K562 (cell line): ENCODE measurements at regions of chr4 and their contacts with region 1.

Region 1: DNA sequence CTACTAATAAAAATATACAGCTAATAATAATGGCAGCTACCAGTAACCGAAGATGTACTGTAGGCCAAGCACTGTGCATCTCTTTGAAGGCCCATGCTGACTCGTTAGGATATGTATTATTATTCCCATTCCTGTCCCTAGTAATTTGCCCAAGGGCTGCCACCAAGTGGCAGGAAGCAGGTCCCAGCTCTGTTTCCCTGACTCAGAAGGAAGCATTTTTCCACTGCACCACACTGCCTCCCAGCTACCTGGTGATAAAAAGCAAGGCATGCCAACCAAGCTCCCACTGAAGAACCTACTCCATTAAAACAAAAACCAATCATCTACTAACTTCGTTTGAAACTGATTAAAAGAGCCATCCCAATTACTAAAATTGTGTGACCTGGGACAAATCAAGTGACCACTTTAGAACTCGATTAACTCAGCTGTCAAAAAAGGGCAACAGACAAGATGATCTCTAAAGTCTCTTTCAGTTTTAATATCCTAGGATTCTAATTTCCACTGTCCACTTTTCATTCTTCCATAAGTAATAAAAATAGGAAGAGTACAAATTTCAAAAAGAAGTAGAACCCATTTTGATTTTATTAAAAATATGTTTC is 24.3 kb upstream of the PGM2 start:
- DNase-seq: peak in 3 of 4 experiments; percentile 11 to 61 (median 24)
- ATAC-seq: peak; percentile 84
- H3K4me3 ChIP-seq: no peak overlapping the region
- H3K27ac ChIP-seq: no peak overlapping the region
- H3K4me1 ChIP-seq: no peaks in the 10 kb centered on the region
- H3K27me3 ChIP-seq: no peaks in the 10 kb centered on the region
- CTCF ChIP-seq: peak; percentile 55 to 88 (median 85)
- EP300 ChIP-seq: no peak
- POLR2A ChIP-seq: no peak
- RAD21 ChIP-seq: peak; percentile 72 to 87

Region 2: DNA sequence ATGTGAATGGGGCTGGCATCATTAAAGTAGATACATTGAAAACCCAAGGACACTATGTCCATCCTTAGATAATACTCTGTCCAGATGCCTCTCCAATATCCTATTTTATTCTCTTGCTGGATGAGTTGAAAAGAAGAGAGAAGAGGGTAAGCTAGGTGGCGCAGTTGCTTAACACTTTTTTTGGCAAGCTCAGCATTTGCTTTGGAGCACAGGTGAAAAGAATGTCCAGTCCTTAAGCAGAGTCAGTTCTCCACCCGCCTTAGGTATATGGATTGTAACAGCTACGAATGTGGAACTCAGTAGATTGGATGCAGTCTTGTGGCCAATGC is 349.3 kb before region 1 on chr4:
- CTCF ChIA-PET with region 1: interaction called, 3 read pairs
- POLR2A ChIA-PET with region 1: no interaction called
- in situ Hi-C with region 1: no loop called
- intact Hi-C with region 1: loop called (anchors 1 kb)
- DNase-seq: peak; percentile 12 to 70 (median 30)
- ATAC-seq: peak; percentile 89
- H3K4me3 ChIP-seq: no peak overlapping the region
- H3K27ac ChIP-seq: no peak overlapping the region
- H3K4me1 ChIP-seq: peaks cover 0 to 9% of the 10 kb centered on the region in 2 experiments; a peak in 2 of 5 replicates
- H3K27me3 ChIP-seq: peaks cover 7 to 9% of the 10 kb centered on the region in 2 experiments; a peak in 4 of 5 replicates
- CTCF ChIP-seq: peak; percentile 54 to 71 (median 64)
- EP300 ChIP-seq: no peak
- POLR2A ChIP-seq: no peak
- RAD21 ChIP-seq: peak; percentile 47 to 77; a peak in 3 of 4 replicates

Region 3: GRCh38 chr4:37603070-37603468 is 199.1 kb before region 1 on chr4:
- CTCF ChIA-PET with region 1: interaction called, 16 read pairs
- POLR2A ChIA-PET with region 1: no interaction called
- in situ Hi-C with region 1: no loop called
- intact Hi-C with region 1: loop called (anchors 1 kb)
- DNase-seq: peak; percentile 76 to 87 (median 83)
- ATAC-seq: peak; percentile 99
- H3K4me3 ChIP-seq: no peak overlapping the region
- H3K27ac ChIP-seq: no peak overlapping the region
- H3K4me1 ChIP-seq: 0 out of 5 replicates have a peak, but pooled peaks cover 0 to 3% of the 10 kb centered on the region in 2 experiments
- H3K27me3 ChIP-seq: no peaks in the 10 kb centered on the region; a peak in 2 of 5 replicates
- CTCF ChIP-seq: peak; percentile 86 to 93 (median 92)
- EP300 ChIP-seq: no peak
- POLR2A ChIP-seq: no peak
- RAD21 ChIP-seq: peak; percentile 90 to 96

Region 4: DNA sequence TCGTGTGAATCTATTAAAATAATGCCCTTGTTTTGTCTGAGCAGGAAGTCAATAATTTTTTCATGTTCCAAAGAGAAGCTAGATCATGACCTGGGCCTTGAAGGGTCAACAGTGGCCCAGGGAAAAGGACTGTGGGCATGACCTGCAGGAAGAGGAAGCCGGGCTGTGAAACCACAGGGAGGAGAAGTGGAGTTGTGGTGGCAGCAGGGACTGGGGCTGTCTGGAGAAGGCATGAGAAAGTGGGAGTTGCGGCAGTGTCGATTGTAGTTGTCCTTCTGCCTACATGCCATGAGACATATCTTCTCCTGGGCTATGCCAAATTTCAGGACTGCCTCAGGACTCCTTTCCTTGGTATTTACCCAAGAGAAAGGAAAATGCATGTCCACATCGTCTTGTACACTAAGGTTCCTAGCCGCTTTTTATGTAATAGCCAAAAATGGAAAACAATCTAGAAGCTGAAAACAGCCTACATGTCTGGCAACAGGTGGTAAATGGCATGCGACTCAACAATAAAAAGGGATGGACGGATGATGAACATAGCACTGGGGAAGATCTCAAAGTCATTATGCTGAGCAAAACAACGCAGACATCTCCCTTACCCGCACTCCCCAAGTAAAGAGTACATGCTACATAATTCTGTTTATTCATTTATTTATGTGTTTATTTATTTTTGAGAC is 144.5 kb after region 1 on chr4:
- CTCF ChIA-PET with region 1: no interaction called
- POLR2A ChIA-PET with region 1: no interaction called
- in situ Hi-C with region 1: no loop called
- intact Hi-C with region 1: no loop called
- DNase-seq: no peak
- ATAC-seq: no peak
- H3K4me3 ChIP-seq: no peak overlapping the region
- H3K27ac ChIP-seq: no peak overlapping the region
- H3K4me1 ChIP-seq: no peaks in the 10 kb centered on the region
- H3K27me3 ChIP-seq: peaks cover 14 to 18% of the 10 kb centered on the region in 2 experiments
- CTCF ChIP-seq: no peak
- EP300 ChIP-seq: no peak
- POLR2A ChIP-seq: no peak
- RAD21 ChIP-seq: no peak

Region 5: DNA sequence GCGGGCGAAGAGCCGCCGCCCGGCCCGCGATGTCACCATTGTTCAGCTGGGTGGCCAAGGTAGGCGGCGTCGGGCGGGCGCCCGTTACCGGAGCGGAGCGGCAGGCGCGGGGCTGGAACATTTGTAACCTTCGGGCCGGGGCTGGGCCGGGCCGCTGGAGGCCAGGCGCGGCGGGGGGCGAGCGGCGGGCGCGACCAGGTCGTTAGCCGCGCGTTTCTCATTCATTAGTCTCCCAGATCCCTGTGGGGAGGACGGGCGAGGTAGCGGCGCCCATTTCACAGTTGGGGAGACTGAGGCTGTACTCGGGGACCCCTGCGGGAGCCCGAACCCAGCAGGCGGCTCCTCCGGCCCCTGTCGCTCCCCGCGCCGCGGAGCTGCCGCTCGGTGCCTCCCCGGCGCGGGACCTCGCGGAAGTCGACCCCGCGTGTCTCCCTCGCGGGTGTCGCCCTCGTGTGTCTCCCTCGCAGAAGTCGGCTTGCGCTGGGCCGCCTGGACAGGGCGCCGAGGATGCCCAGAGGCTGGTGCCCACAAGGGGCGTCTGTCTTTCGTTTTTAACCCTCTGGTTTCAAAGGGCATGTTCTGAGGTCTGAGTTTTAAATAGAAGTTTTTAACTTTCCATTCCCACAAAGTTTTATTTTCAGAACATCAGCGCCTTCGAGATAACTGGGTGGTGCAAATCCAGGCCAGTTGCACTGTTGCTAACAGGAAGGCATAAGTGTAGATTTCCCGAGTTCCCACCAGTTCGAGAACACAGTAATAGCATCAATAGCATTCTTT is 175.5 kb after region 1 on chr4:
- CTCF ChIA-PET with region 1: interaction called, 4 read pairs
- POLR2A ChIA-PET with region 1: no interaction called
- in situ Hi-C with region 1: no loop called
- intact Hi-C with region 1: loop called (anchors 5 kb)
- DNase-seq: peak; percentile 40 to 55 (median 47)
- ATAC-seq: peak; percentile 81
- H3K4me3 ChIP-seq: peak overlapping the region; percentile 60
- H3K27ac ChIP-seq: no peak overlapping the region
- H3K4me1 ChIP-seq: peaks cover 0 to 10% of the 10 kb centered on the region in 2 experiments; a peak in 3 of 5 replicates
- H3K27me3 ChIP-seq: peaks cover 21 to 28% of the 10 kb centered on the region in 2 experiments; a peak in 4 of 5 replicates
- CTCF ChIP-seq: peak; percentile 47 to 72 (median 50); a peak in 5 of 6 replicates
- EP300 ChIP-seq: no peak
- POLR2A ChIP-seq: no peak
- RAD21 ChIP-seq: peak; percentile 42 to 43

Region 6: DNA sequence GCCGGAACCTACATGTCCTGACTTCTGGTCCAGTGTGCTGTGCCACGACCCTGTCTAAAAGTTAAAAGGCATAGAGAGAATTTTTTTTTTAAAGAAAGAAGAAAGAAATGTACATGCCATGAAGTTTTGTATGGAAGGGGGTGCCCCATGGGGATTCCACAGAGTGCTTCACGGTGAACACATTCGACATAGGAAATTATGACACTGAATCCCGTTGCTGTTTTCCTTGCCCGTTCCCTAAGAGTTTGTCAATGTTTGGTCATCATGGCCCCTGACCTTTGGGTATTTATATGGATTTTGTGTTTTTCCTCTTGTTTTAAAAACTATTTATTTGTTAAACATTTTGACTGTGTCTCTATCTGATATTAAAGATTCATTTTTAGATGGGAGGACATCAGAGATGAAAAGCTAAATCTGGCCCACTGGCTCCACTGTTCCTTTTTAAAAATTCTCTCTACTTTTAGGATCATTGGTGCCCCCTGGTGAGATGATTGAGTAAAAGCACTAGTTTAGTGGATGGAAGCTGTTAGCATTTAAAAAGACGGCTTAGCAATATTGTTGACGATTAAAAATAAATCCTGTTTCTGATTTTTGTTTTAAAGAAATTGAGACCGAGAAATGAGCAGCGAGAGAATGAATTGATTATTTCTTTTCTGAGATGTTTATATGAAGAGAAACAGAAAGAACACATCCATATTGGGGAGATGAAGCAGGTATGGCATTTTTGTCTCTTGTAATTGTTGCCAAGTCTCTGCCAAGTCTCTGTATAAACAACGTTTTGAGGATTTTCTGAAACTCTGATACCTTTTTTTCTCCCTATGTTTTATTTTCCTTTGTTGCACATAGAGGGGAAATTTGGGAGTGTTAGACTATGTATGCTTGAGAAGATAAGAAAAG is 233.1 kb after region 1 on chr4:
- CTCF ChIA-PET with region 1: interaction called, 32 read pairs
- POLR2A ChIA-PET with region 1: no interaction called
- in situ Hi-C with region 1: loop called (anchors 5 kb)
- intact Hi-C with region 1: loop called (anchors 1 kb)
- DNase-seq: peak; percentile 47 to 67 (median 54)
- ATAC-seq: peak; percentile 64; the same call in 2 of the 3 replicates
- H3K4me3 ChIP-seq: no peak overlapping the region
- H3K27ac ChIP-seq: no peak overlapping the region
- H3K4me1 ChIP-seq: no peaks in the 10 kb centered on the region
- H3K27me3 ChIP-seq: peaks cover 4 to 13% of the 10 kb centered on the region in 2 experiments; a peak in 2 of 5 replicates
- CTCF ChIP-seq: peak; percentile 44 to 73 (median 50); a peak in 4 of 6 replicates
- EP300 ChIP-seq: no peak
- POLR2A ChIP-seq: no peak
- RAD21 ChIP-seq: peak; percentile 85 to 86

Region 7: DNA sequence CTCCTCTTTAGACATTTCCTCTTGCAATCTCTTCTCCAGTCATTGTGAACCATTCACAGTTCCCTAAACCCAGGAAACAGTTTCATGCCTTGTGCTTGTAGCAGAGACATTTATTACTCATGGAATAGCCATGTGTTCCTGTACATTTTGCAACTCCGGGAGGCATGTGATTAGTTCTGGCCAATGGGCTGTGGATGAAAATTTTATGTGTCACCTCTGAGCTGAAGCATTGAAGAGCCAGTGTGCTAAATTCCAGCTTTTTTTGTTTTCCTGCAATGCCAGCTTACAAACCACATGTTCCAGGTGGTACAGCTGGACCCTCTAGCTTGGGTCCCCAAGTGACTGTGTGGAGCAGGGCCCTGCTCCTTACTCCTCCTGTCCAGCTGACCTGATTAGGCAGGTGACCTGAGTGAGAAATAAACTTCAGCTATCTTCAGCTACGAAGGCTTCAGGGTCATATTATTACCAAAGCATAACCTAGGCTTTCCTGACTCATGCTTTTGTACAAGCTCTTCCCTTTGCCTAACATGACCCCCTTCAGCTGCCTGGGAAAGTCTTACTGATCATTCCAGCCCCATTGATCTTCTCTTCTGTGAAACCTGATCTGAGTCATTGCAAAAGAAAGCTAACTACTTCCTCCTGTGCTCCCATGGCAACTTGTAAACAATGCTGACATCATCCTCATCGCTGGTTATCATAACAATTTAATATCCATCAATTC is 358.5 kb after region 1 on chr4:
- CTCF ChIA-PET with region 1: no interaction called
- POLR2A ChIA-PET with region 1: no interaction called
- in situ Hi-C with region 1: no loop called
- intact Hi-C with region 1: loop called (anchors 10 kb)
- DNase-seq: peak in 2 of 4 experiments; percentile 18 to 23
- ATAC-seq: peak; percentile 48; the same call in 2 of the 3 replicates
- H3K4me3 ChIP-seq: no peak overlapping the region
- H3K27ac ChIP-seq: no peak overlapping the region
- H3K4me1 ChIP-seq: peaks cover 0 to 9% of the 10 kb centered on the region in 2 experiments; a peak in 2 of 5 replicates
- H3K27me3 ChIP-seq: peaks cover 0 to 4% of the 10 kb centered on the region in 2 experiments; a peak in 1 of 5 replicates
- CTCF ChIP-seq: no peak
- EP300 ChIP-seq: no peak
- POLR2A ChIP-seq: no peak
- RAD21 ChIP-seq: no peak